A673 (cell line): ENCODE measurements at regions of chr5 and their contacts with region 1.

Region 1: GRCh38 chr5:154058055-154059038 is 19.6 kb downstream of the MFAP3 start:
- DNase-seq: peak; percentile 14
- H3K4me3 ChIP-seq: no peak overlapping the region
- H3K27ac ChIP-seq: no peak overlapping the region
- H3K4me1 ChIP-seq: peaks cover 19% of the 10 kb centered on the region
- H3K27me3 ChIP-seq: no peaks in the 10 kb centered on the region
- CTCF ChIP-seq: no peak

Region 2: GRCh38 chr5:154627698-154628678 is 569.6 kb after region 1 on chr5:
- CTCF ChIA-PET with region 1: no interaction called
- POLR2A ChIA-PET with region 1: no interaction called
- intact Hi-C with region 1: loop called (anchors 5 kb)
- DNase-seq: peak; percentile 50
- H3K4me3 ChIP-seq: no peak overlapping the region
- H3K27ac ChIP-seq: no peak overlapping the region
- H3K4me1 ChIP-seq: peaks cover 8% of the 10 kb centered on the region
- H3K27me3 ChIP-seq: no peaks in the 10 kb centered on the region
- CTCF ChIP-seq: no peak